Activated CD4-positive, alpha-beta memory T cell treated with anti-CD3 and anti-CD28 coated beads for 36 hours (primary cell): ENCODE measurements at regions of chr2 and their contacts with region 1.

Region 1: DNA sequence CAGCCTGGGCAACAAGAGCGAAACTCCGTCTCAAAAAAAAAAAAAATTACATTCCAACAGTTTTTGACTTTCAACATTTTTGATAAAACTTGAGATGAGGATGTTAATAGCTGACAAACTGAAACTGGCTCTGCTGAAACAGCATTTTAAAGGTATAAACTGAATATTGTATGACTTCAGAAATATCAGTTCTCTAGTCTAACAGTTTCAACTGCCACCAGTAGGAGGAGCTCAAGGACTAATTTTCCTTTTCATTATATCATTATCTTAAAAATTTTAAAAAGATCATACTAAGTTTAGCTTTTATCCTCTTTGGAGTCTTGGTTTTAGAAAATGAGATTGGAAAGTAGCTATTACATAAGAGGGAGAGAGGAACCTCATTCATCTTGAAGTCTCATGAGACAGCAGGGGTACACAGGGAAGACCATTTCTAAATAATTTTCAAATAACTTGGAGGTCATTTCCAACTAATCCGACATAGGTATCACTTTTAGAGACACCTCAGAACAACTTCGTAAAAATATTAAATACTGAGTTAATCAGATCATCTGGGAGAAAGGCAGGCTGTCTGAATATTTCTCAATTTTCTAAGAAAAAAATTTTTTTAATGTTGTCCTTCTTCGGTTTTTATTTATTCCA is 37.6 kb upstream of the MCM6 start:
- DNase-seq: no peak
- H3K4me3 Mint-ChIP-seq: no peak overlapping the region
- H3K27ac Mint-ChIP-seq: no peak overlapping the region
- H3K4me1 Mint-ChIP-seq: peaks cover 14% of the 10 kb centered on the region
- H3K27me3 Mint-ChIP-seq: no peaks in the 10 kb centered on the region

Region 2: DNA sequence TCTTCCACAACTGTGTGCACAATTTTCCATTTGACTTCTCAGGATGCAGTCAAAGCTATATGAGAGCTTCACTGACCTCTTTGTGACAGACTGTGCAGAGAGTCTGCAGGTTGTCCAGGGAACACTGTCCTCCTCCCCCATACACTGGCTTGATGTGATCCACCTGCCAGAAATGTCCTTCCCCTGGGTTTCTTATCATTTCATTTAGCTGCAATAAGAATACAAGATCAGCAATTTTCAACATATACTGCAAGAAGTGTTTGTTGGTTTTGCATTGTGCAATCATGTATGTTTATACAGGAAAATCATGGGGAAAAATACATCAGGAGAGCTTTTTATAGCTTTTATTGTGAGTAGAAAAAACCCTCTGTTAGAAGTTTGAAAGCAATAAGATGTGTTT is 711.1 kb before region 1 on chr2:
- CTCF ChIA-PET with region 1: no interaction called
- POLR2A ChIA-PET with region 1: no interaction called
- intact Hi-C with region 1: no loop called
- DNase-seq: no peak
- H3K4me3 Mint-ChIP-seq: no peak overlapping the region
- H3K27ac Mint-ChIP-seq: no peak overlapping the region
- H3K4me1 Mint-ChIP-seq: no peaks in the 10 kb centered on the region
- H3K27me3 Mint-ChIP-seq: no peaks in the 10 kb centered on the region

Region 3: GRCh38 chr2:135931776-135932443 is 18.1 kb after region 1 on chr2:
- CTCF ChIA-PET with region 1: interaction called, 13 read pairs
- POLR2A ChIA-PET with region 1: no interaction called
- intact Hi-C with region 1: no loop called
- DNase-seq: no peak
- H3K4me3 Mint-ChIP-seq: no peak overlapping the region
- H3K27ac Mint-ChIP-seq: no peak overlapping the region
- H3K4me1 Mint-ChIP-seq: peaks cover 20% of the 10 kb centered on the region
- H3K27me3 Mint-ChIP-seq: no peaks in the 10 kb centered on the region